Heart left ventricle (tissue), 16 donors: ENCODE measurements at regions of chr2 and their contacts with region 1.

Region 1: GRCh38 chr2:135052042-135052876 is at the start of gene RAB3GAP1:
- DNase-seq: peak; percentile 76 to 89 (median 79)
- ATAC-seq: peak; percentile 79 to 94 (median 94)
- H3K4me3 ChIP-seq: peak within 1 kb of the TSS; percentile 64 to 89 (median 77)
- H3K27ac ChIP-seq: peak within 1 kb of the TSS; percentile 61 to 98 (median 94)
- H3K4me1 ChIP-seq: peaks cover 4 to 47% (median 32%) of the 10 kb centered on the region in 12 donors
- H3K27me3 ChIP-seq: no peaks in the 10 kb centered on the region
- CTCF ChIP-seq: no peak
- POLR2A ChIP-seq: peak in 1 of 2 donors; percentile 20
- total RNA-seq, gene RAB3GAP1: 40.6 to 63.6 (median 56.4) TPM

Region 2: GRCh38 chr2:135741395-135742324 is 689.4 kb after region 1 on chr2 and contains the start of gene UBXN4:
- intact Hi-C with region 1: loop called in 1 of 10 experiments (anchors 5 kb)
- DNase-seq: peak; percentile 98 to 99 (median 98)
- ATAC-seq: peak; percentile 97 to 100 (median 98)
- H3K4me3 ChIP-seq: peak within 1 kb of the TSS; percentile 50 to 100 (median 89)
- H3K27ac ChIP-seq: peak within 1 kb of the TSS; percentile 86 to 100 (median 98)
- H3K4me1 ChIP-seq: peaks cover 0 to 35% (median 26%) of the 10 kb centered on the region in 12 donors
- H3K27me3 ChIP-seq: no peaks in the 10 kb centered on the region
- CTCF ChIP-seq: peak in 9 of 12 donors; percentile 20 to 55 (median 41)
- POLR2A ChIP-seq: peak; percentile 71 to 82
- total RNA-seq, gene UBXN4: 30.9 to 90.5 (median 57.0) TPM